ENCODE measurements at regions of chr20 and their contacts with region 1.

Region 1: GRCh38 chr20:47785854-47786764 is 828 bp upstream of the SULF2 start:
- DNase-seq: peak; percentile 80
- ATAC-seq: peak; percentile 90

Region 2: DNA sequence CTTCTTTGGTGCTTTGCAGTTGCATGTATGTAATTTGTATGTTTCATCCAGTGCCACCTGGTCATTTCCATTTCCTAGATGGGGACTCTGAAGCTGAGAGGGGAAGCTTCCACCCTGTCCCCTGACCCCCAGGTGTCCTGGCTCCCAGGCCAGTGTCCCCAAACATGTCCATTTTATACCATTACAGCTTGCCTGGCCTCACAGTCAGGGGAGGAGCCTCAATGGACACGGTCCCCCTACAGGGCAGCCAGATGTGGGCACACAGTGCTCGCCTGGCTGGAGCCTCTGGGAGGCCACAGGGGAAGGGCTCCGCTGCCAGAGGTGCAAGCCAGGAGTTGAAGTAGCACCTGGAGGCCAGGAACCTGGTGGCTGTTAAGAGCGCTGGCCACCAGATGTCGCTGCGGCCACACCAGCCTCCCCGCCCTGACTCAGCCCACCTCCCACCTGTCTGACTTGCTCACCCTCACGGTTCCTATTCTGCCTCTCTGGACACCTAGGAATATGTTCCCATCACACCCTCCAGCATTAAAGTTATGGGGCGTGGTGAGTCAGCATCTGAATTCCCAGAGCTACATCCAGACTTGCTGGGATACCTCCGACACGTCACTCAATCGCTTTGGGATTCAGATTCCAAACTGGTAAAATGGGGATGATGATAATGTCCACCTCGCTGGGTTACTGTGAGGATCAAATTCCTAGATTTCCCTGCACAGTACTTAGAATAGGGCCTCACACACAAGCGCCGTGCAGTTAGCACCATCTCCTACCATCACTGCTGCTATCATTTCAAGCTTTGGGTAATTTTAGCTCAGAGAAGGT is 108.3 kb before region 1 on chr20:
- intact Hi-C with region 1: loop called (anchors 5 kb)
- DNase-seq: no peak
- ATAC-seq: no peak

Region 3: DNA sequence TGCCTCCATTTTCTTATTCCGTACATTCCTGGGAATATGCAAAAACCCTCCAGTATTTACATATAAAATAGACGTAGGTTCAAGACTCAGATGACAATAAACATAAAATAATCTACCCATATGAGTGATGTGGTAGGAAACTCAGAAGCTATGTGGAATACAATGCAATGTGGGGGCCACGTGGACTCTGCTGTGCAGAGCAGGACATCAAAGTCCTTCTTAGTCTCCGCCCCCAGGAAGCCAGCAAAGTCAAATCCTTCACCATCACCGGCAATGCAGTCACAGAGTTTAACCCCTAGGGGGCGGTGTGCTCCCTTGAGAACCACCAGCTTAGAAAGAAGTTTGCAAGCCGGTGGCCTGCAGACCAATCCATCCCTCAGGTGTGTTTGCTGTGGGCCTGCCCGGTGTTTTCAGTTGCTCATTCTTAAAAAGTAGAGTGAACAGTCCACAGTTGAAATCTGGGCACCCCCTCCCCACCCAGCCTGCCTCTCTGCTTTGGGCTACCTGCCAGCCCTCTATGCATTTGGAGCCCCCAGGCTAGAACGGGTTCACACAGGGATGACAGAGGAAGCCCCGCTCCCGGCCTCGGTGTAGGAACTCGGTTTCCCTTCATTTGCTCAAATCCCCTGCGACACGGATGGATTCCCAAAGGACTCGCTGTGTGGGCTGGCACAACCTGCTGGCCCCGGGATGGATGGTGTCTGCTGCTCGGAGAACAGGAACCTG is 60.7 kb before region 1 on chr20:
- intact Hi-C with region 1: loop called (anchors 5 kb)
- DNase-seq: peak; percentile 74
- ATAC-seq: peak; percentile 27

Region 4: GRCh38 chr20:47857566-47858471 is 71.7 kb after region 1 on chr20:
- intact Hi-C with region 1: loop called (anchors 5 kb)
- DNase-seq: no peak
- ATAC-seq: peak; percentile 62

Region 5: GRCh38 chr20:48295445-48295963 is 509.4 kb after region 1 on chr20:
- intact Hi-C with region 1: loop called (anchors 5 kb)
- DNase-seq: no peak
- ATAC-seq: no peak

Region 6: GRCh38 chr20:48374991-48375595 is 589.0 kb after region 1 on chr20:
- intact Hi-C with region 1: loop called (anchors 10 kb)
- DNase-seq: no peak
- ATAC-seq: no peak

Measured in Right ventricle myocardium inferior (tissue), 1 donor.